ENCODE measurements at regions of chr6 and their contacts with region 1.

Region 1: GRCh38 chr6:111803804-111804203 is 69.4 kb downstream of the FYN start:
- DNase-seq: no peak
- ATAC-seq: peak; percentile 14
- H3K4me3 Mint-ChIP-seq: peak overlapping the region; percentile 66
- H3K27ac Mint-ChIP-seq: peak overlapping the region; percentile 95
- H3K4me1 Mint-ChIP-seq: peaks cover 69% of the 10 kb centered on the region
- H3K27me3 Mint-ChIP-seq: no peaks in the 10 kb centered on the region

Region 2: GRCh38 chr6:111700135-111700690 is 103.6 kb before region 1 on chr6:
- POLR2A ChIA-PET with region 1: no interaction called
- DNase-seq: no peak
- ATAC-seq: no peak
- H3K4me3 Mint-ChIP-seq: no peak overlapping the region
- H3K27ac Mint-ChIP-seq: no peak overlapping the region
- H3K4me1 Mint-ChIP-seq: peaks cover 13% of the 10 kb centered on the region
- H3K27me3 Mint-ChIP-seq: no peaks in the 10 kb centered on the region

Region 3: GRCh38 chr6:111793711-111794111 is 10.1 kb before region 1 on chr6:
- POLR2A ChIA-PET with region 1: interaction called, 10 read pairs
- DNase-seq: peak; percentile 64
- ATAC-seq: peak; percentile 86
- H3K4me3 Mint-ChIP-seq: peak overlapping the region; percentile 70
- H3K27ac Mint-ChIP-seq: peak overlapping the region; percentile 89
- H3K4me1 Mint-ChIP-seq: peaks cover 59% of the 10 kb centered on the region
- H3K27me3 Mint-ChIP-seq: no peaks in the 10 kb centered on the region